Cardiac septum (tissue), 1 donor: ENCODE measurements at regions of chr3 and their contacts with region 1.

Region 1: GRCh38 chr3:123028233-123028828 is 768 bp upstream of the SEMA5B start:
- DNase-seq: no peak

Region 2: GRCh38 chr3:122858373-122858772 is 170.0 kb before region 1 on chr3:
- intact Hi-C with region 1: loop called (anchors 2 kb)
- DNase-seq: no peak

Region 3: GRCh38 chr3:122942937-122943827 is 85.1 kb before region 1 on chr3:
- intact Hi-C with region 1: loop called (anchors 1 kb)
- DNase-seq: peak; percentile 84

Region 4: DNA sequence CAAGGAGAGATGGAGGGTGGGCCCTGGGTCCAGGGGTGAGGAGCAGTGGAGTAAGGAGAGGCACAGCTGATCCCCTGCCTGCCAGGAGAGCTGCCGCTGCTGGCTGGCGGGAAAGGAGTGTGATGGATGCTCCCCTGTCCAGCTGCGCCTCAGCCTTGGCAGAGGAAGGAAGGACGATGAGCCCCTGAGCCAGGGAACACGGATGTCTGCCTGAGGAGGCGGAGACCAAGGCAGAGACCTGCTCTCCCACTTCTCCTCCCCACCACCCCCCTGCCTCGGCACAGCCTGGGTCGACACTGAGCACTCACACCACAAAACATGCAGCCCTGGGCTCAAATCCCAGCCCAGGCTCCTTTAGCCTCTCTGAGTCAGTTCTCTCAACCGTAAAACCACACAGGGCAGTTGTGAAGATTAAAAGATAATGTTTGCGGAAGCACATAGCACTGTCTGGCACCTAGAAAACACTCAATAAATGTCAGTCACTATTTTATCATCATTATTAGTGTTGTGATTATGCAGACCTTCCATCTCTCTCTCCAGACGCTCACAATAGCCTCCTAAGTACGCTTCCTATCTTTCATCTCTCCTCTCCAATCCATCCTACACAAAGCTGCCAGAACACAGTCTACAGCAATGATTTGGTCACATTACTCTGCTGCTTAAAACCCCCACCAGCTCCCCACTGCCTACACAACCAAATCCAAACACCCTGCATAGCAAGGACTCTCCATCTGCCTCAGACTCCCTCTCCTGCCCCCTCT is 53.0 kb before region 1 on chr3:
- intact Hi-C with region 1: loop called (anchors 5 kb)
- DNase-seq: no peak

Region 5: GRCh38 chr3:123201566-123202427 is 173.5 kb after region 1 on chr3 and contains the start of gene SEC22A:
- intact Hi-C with region 1: loop called (anchors 5 kb)
- DNase-seq: peak; percentile 97
- total RNA-seq, gene SEC22A: 8.9 TPM

Region 6: GRCh38 chr3:123258811-123259420 is 230.6 kb after region 1 on chr3:
- intact Hi-C with region 1: loop called (anchors 5 kb)
- DNase-seq: no peak